ENCODE measurements at regions of chr20 and their contacts with region 1.

Region 1: GRCh38 chr20:35008411-35009342 is 53.0 kb downstream of the MYH7B start:
- DNase-seq: peak in 1 of 5 donors; percentile 34
- ATAC-seq: peak in 1 of 4 donors; percentile 2
- H3K4me3 ChIP-seq: no peak overlapping the region
- H3K27ac ChIP-seq: no peak overlapping the region
- H3K4me1 ChIP-seq: peaks cover 0 to 31% (median 4%) of the 10 kb centered on the region in 12 donors
- H3K27me3 ChIP-seq: no peaks in the 10 kb centered on the region
- CTCF ChIP-seq: no peak
- POLR2A ChIP-seq: no peak

Region 2: DNA sequence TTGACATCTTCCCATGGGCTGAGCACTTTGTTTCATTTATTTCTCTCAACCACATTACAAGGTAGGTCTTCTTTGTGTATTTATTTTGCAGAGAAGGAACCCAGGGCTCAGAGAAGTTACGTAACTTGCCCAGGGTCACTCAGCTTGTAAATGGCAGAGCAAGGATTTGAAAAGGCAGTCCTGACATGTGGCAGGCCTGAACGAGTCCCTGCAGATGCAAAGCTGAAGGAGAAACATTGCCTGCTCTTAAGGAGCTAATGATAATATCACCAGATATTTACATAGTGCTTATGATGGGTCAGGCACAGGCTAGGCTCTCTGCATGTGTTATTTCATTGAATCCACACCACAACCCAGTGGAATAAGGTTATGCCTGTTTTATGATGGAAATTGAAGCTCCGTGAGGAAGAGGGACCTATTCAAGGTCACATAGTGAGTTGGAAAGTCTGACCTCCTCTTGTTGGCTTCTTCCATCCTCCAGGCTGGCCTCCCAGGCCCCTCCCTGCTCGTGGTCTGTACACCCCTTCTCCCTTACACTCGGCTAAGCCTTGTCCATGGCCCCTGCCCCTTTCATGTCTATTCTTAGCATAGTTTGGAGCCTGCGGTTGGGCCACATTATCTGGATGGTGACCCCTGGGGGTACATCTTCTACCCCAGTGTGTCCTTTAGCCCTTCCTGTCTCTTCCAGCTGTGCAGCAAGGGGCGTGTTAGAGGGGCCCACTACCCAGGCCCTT is 40.5 kb before region 1 on chr20:
- intact Hi-C with region 1: loop called in 1 of 10 experiments (anchors 5 kb)
- DNase-seq: no peak
- ATAC-seq: no peak
- H3K4me3 ChIP-seq: no peak overlapping the region
- H3K27ac ChIP-seq: peak overlapping the region in 8 of 12 donors; percentile 55 to 84 (median 74)
- H3K4me1 ChIP-seq: peaks cover 0 to 27% (median 7%) of the 10 kb centered on the region in 12 donors
- H3K27me3 ChIP-seq: no peaks in the 10 kb centered on the region
- CTCF ChIP-seq: no peak
- POLR2A ChIP-seq: no peak